Common myeloid progenitor, CD34-positive (primary cell): ENCODE measurements at regions of chr6 and their contacts with region 1.

Region 1: DNA sequence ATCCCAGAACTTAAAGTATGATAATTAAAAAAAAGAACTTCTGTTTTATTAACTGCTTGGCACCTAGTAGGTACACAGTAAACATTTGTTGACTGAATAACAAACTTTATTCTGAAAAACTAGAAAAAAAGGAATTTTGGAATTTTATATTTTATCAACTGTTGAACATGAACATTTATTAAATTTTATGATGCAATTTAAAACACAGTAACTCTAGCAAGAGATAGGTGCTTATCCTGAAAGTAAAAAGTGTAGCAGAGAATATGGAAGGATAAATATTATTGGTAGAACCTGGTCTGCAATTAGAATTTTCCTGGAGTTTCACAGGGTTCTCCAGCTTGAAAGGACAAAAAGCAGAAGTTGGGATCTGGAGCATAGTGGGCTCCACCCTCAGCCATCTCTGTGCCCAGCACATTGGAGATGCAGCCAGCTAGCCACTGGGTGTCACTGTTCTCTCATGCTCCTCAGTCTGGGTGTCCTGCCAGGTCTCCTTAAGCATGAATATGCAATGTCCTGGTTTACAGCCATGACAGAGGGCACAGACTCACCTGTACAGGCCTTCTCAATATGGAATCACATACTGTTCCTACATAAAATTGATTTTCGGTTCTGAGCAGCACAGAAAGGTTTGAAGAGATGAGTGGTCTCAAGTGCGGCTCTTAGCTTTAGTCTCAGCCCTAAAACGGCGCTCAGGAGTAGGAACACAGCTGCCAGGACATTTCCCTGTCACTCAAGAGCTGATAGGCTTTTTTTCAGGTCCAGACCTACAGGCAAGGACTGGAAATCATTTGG is 31.7 kb upstream of the IL20RA start:
- DNase-seq: peak; percentile 78 to 87 (median 87)
- H3K4me3 ChIP-seq: no peak overlapping the region
- H3K27ac ChIP-seq: no peak overlapping the region
- H3K4me1 ChIP-seq: no peaks in the 10 kb centered on the region
- H3K27me3 ChIP-seq: peaks cover 0 to 4% (median 0%) of the 10 kb centered on the region in 5 experiments

Region 2: GRCh38 chr6:136989571-136990241 is 86.8 kb before region 1 on chr6:
- CTCF ChIA-PET with region 1: no interaction called
- POLR2A ChIA-PET with region 1: no interaction called
- DNase-seq: peak in 2 of 3 donors; percentile 19 to 28
- H3K4me3 ChIP-seq: peak overlapping the region in 3 of 7 experiments; percentile 34 to 59 (median 36)
- H3K27ac ChIP-seq: no peak overlapping the region
- H3K4me1 ChIP-seq: peaks cover 0 to 7% (median 6%) of the 10 kb centered on the region in 4 experiments
- H3K27me3 ChIP-seq: peaks cover 12 to 79% (median 39%) of the 10 kb centered on the region in 5 experiments

Region 3: GRCh38 chr6:137089305-137089704 is 12.8 kb after region 1 on chr6:
- CTCF ChIA-PET with region 1: interaction called, 13 read pairs
- POLR2A ChIA-PET with region 1: no interaction called
- DNase-seq: peak in 1 of 3 donors; percentile 16
- H3K4me3 ChIP-seq: no peak overlapping the region
- H3K27ac ChIP-seq: no peak overlapping the region
- H3K4me1 ChIP-seq: peaks cover 0 to 6% (median 3%) of the 10 kb centered on the region in 4 experiments
- H3K27me3 ChIP-seq: peaks cover 0 to 3% (median 0%) of the 10 kb centered on the region in 5 experiments

Region 4: GRCh38 chr6:137148306-137149034 is 72.0 kb after region 1 on chr6:
- CTCF ChIA-PET with region 1: no interaction called
- POLR2A ChIA-PET with region 1: no interaction called
- DNase-seq: no peak
- H3K4me3 ChIP-seq: no peak overlapping the region
- H3K27ac ChIP-seq: no peak overlapping the region
- H3K4me1 ChIP-seq: no peaks in the 10 kb centered on the region
- H3K27me3 ChIP-seq: peaks cover 0 to 50% (median 14%) of the 10 kb centered on the region in 5 experiments